Naive thymus-derived CD8-positive, alpha-beta T cell (primary cell): ENCODE measurements at regions of chr6 and their contacts with region 1.

Region 1: DNA sequence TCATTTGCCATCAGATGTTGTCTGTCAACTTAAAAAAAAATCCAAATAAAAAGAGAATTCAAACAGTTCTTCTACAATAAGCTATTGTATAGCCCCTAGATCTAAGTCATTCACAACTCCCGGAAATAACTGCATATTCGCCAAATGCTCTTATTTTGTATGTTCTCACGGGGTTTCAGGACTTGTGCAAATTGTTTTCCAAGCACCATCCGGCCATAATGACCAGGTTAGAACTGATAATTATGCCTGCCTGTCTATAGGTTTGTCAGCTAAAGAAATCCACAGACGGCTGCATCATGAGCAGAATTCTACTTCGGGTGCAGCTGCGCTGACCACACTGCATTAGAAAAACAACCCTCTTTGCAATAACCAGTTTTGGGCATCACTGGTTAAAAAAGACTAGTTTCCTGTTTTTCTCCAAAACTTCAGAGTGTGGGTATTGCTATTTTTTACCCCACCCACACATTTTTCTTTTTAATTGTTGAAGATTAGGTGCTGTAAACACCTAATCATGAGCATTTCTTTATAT is 87.7 kb downstream of the HIVEP2 start:
- DNase-seq: peak in 6 of 10 donors; percentile 23 to 72 (median 57)
- ATAC-seq: peak; percentile 45 to 48
- H3K4me3 Mint-ChIP-seq: peak overlapping the region; percentile 76 to 91 (median 86)
- H3K27ac Mint-ChIP-seq: peak overlapping the region; percentile 96 to 98 (median 97)
- H3K4me1 Mint-ChIP-seq: peaks cover 49 to 94% (median 92%) of the 10 kb centered on the region in 4 donors
- H3K27me3 Mint-ChIP-seq: no peaks in the 10 kb centered on the region

Region 2: GRCh38 chr6:142830116-142830710 is 27.1 kb before region 1 on chr6:
- POLR2A ChIA-PET with region 1: no interaction called
- DNase-seq: no peak
- ATAC-seq: no peak
- H3K4me3 Mint-ChIP-seq: no peak overlapping the region
- H3K27ac Mint-ChIP-seq: peak overlapping the region in 6 of 10 donors; percentile 25 to 75 (median 58)
- H3K4me1 Mint-ChIP-seq: peaks cover 40 to 70% (median 63%) of the 10 kb centered on the region in 4 donors
- H3K27me3 Mint-ChIP-seq: no peaks in the 10 kb centered on the region

Region 3: DNA sequence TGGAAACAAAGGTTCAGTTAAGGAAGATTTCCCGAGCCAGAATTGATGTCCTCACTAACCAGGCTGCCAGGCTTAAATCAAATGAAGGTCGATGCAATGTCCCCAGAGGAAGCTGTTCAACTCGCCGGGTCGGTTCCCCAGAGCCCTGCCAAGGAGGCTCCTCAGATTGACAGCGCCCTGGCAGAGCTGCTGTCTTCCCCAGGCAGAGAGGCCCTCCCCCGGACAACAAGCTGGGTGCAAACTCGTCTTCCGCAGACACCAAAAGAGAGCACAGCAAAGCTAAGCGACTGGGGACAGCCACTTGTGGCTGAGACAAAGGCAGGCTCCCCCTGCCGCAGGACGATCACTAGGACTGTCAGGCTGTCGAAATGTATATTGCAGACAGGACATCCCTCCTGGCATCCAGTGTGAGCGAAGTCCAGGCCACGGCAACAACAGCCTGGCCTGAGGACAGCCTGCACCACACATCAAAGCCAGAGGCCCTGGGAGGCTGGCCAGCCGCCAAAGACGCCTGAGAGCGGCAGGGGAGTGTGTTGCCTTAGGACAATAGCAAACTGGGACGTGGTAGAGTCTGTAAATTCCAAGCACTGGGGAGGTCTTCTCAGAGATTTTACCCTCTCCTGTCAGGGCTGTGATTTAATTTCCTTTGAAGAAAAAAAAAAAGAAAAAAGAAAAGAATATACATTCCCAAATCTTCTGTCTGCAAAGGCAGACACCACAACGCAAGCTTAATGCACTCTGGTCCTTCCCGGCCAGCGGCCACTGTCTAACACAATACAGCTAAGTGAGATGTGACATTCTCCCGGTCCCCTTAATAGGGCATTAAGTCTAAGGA is 11.5 kb before region 1 on chr6:
- POLR2A ChIA-PET with region 1: interaction called, 153 read pairs
- DNase-seq: peak; percentile 39 to 79 (median 61)
- ATAC-seq: peak; percentile 63 to 78
- H3K4me3 Mint-ChIP-seq: peak overlapping the region; percentile 77 to 90 (median 86)
- H3K27ac Mint-ChIP-seq: peak overlapping the region; percentile 91 to 98 (median 96)
- H3K4me1 Mint-ChIP-seq: peaks cover 40 to 98% (median 89%) of the 10 kb centered on the region in 4 donors
- H3K27me3 Mint-ChIP-seq: no peaks in the 10 kb centered on the region

Region 4: GRCh38 chr6:142885182-142885867 is 28.0 kb after region 1 on chr6:
- POLR2A ChIA-PET with region 1: interaction called, 60 read pairs
- DNase-seq: peak; percentile 21 to 85 (median 72)
- ATAC-seq: peak; percentile 86 to 90
- H3K4me3 Mint-ChIP-seq: peak overlapping the region; percentile 78 to 99 (median 97)
- H3K27ac Mint-ChIP-seq: peak overlapping the region; percentile 89 to 100 (median 100)
- H3K4me1 Mint-ChIP-seq: peaks cover 37 to 96% (median 88%) of the 10 kb centered on the region in 4 donors
- H3K27me3 Mint-ChIP-seq: no peaks in the 10 kb centered on the region

Region 5: GRCh38 chr6:142926494-142927270 is 69.4 kb after region 1 on chr6:
- POLR2A ChIA-PET with region 1: interaction called, 48 read pairs
- DNase-seq: peak; percentile 66 to 94 (median 84)
- ATAC-seq: peak; percentile 74 to 83
- H3K4me3 Mint-ChIP-seq: peak overlapping the region; percentile 72 to 99 (median 96)
- H3K27ac Mint-ChIP-seq: peak overlapping the region; percentile 91 to 100 (median 98)
- H3K4me1 Mint-ChIP-seq: peaks cover 25 to 72% (median 55%) of the 10 kb centered on the region in 4 donors
- H3K27me3 Mint-ChIP-seq: no peaks in the 10 kb centered on the region